A673 (cell line): ENCODE measurements at regions of chr18 and their contacts with region 1.

Region 1: DNA sequence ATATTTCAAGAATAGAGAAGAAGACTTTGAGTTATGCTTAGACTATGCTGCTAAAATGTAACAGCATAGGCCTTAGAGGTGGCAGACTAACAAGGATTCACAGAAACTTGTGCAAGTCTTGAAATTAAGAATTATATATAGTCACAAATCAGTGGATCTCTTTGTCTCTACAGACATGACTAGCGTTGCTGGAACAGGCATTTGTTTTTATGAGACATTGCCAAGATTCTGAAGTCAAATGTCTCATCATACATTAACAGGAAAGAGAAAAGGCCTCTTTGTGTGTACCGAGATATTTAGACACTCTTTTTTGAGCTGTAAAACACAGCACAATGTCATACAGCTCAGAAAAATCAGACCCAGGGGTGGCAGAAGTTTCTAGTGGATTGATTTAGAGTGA is 207.1 kb downstream of the TMX3 start:
- DNase-seq: no peak
- H3K4me3 ChIP-seq: no peak overlapping the region
- H3K27ac ChIP-seq: peak overlapping the region; percentile 96
- H3K4me1 ChIP-seq: peaks cover 33% of the 10 kb centered on the region
- H3K27me3 ChIP-seq: no peaks in the 10 kb centered on the region
- CTCF ChIP-seq: no peak

Region 2: DNA sequence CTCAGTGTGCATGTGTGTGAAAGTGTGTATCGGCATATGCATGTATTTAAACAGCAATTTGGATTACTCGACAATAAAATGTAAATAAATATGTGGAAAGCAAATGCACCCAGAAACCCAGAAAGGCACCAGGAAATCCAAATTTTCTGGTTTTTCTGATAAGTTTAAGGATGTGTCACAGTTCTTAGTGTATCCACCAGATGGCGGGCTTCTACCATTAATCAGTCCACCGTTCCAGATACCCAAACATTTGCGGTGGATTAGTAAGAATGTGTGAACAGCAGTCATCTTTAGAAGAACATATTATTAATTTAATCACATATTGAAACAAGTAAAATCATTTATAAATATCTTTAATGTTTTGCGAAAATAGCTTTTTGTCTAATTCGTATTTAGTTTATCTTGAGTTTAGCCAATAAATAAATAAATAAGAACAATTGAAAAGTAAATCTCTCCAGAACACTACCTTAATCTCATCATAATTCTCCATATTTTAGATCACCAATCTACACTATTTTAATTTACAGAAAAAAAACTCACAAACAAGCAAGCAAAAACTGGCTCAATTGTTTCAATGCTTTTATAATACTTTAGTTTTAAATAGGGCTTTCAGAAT is 1290.1 kb before region 1 on chr18:
- CTCF ChIA-PET with region 1: no interaction called
- POLR2A ChIA-PET with region 1: no interaction called
- intact Hi-C with region 1: loop called (anchors 2 kb)
- DNase-seq: peak; percentile 77
- H3K4me3 ChIP-seq: no peak overlapping the region
- H3K27ac ChIP-seq: no peak overlapping the region
- H3K4me1 ChIP-seq: peaks cover 16% of the 10 kb centered on the region
- H3K27me3 ChIP-seq: no peaks in the 10 kb centered on the region
- CTCF ChIP-seq: peak; percentile 73

Region 3: DNA sequence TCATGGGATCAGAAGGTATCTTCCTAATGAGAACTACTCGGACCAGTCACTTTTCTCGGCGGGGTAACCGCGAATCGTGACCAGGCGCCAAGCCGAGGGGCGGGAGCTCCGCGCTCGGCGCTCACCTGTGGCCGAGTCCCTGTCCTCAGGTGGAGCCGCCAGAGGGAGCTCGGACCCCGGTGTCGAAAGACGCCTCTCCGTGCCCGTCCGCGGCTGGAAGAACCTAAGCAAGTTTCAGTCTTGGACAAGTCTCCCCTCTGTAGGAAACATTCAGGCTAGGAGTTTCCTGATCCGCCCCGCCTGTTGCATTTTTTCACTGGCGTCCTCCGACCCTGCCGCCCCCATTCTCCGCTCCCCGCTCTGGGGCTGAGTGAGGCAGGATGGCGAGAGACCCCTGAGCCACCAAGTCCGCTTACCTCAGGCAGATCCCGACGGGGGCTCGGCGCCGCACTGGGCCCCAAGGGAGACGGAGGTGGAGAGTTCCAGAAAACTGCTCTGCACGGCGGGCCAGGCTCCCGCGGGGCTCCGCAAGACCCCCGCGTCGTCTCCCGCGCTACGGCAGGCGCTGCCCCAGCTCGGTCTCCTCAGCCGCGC is 991.7 kb before region 1 on chr18:
- CTCF ChIA-PET with region 1: interaction called, 4 read pairs
- POLR2A ChIA-PET with region 1: interaction called, 25 read pairs
- intact Hi-C with region 1: loop called (anchors 2 kb)
- DNase-seq: peak; percentile 88
- H3K4me3 ChIP-seq: peak overlapping the region; percentile 85
- H3K27ac ChIP-seq: peak overlapping the region; percentile 90
- H3K4me1 ChIP-seq: peaks cover 8% of the 10 kb centered on the region
- H3K27me3 ChIP-seq: no peaks in the 10 kb centered on the region
- CTCF ChIP-seq: peak; percentile 79

Region 4: DNA sequence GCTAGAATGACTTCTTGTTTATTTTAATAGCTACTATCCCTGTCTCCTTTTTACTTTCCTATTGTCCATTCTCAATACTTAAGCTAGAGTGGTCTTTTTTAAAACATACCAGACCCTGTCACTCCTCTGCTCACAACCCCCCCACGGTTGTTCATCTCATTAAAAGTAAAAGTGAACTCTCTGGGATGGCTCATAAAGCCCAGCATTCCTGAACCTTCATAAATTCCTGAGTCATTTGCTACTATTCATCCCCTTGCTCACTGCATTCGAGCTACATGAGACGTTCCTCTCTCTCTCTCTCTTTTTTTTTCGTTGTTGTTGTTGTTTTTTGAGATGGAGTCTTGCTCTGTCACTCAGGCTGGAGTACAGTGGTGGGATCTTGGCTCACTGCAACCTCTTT is 842.5 kb before region 1 on chr18:
- CTCF ChIA-PET with region 1: no interaction called
- POLR2A ChIA-PET with region 1: no interaction called
- intact Hi-C with region 1: loop called (anchors 1 kb)
- DNase-seq: no peak
- H3K4me3 ChIP-seq: no peak overlapping the region
- H3K27ac ChIP-seq: peak overlapping the region; percentile 69
- H3K4me1 ChIP-seq: peaks cover 24% of the 10 kb centered on the region
- H3K27me3 ChIP-seq: no peaks in the 10 kb centered on the region
- CTCF ChIP-seq: no peak

Region 5: DNA sequence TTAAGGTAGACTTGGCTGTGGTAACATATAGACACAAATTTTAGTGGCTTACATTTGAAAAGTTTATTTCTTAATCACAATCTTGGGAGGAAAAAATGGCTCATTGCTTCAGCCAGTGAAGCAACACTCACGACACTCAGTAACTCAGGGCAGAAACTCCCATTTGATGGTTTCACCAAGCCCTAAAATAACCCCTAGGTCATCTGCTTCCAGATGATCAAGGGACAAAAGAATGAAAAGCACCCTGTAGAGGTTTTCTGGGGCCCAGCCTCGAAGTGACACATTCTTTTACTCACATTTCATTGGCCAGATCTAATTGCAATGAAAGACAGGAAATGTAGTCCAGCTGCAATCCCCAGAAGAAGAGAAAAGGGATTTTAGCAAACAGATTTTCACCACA is 68.8 kb before region 1 on chr18:
- CTCF ChIA-PET with region 1: no interaction called
- POLR2A ChIA-PET with region 1: interaction called, 12 read pairs
- intact Hi-C with region 1: loop called (anchors 1 kb)
- DNase-seq: peak; percentile 92
- H3K4me3 ChIP-seq: no peak overlapping the region
- H3K27ac ChIP-seq: peak overlapping the region; percentile 88
- H3K4me1 ChIP-seq: peaks cover 44% of the 10 kb centered on the region
- H3K27me3 ChIP-seq: no peaks in the 10 kb centered on the region
- CTCF ChIP-seq: no peak

Region 6: DNA sequence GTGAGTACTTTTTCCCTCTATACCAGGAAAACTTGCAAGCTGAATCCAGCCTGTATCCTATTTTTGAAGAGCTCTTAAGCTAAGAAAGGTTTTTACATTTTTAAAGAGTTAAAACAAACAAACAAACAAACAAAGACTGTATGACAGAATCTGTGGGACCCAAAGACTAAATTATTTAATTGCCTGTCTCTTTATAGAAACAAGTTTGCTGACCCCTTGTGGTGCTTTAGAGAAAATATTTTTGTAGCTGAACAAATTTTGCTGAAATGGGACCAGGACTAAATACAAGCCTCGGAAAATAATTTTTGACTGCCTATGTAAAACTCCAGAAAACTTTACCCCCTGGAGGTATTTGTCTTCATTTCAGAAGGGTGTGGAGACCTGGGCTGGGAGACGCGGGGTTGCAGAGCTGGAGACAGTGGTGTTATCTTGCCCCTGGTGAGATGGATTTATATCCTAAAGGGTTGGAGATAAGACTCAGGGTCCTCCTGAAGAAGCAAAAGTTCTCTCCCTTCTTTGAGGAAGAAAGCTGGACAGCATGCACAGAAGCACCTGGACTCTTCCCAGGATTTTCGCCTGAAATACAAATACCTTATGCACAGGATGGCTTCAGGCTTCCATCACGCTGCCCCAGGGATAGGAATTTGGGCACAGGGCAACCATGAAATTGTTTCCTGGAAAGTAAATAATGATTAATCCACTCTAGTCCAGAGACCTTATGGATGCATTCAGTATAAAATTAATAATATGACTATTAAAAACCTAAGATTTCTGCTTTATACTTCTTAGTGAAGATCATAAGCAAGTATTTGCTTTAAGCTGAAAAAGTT is 152.8 kb after region 1 on chr18:
- CTCF ChIA-PET with region 1: interaction called, 8 read pairs
- POLR2A ChIA-PET with region 1: no interaction called
- intact Hi-C with region 1: loop called (anchors 2 kb)
- DNase-seq: peak; percentile 76
- H3K4me3 ChIP-seq: no peak overlapping the region
- H3K27ac ChIP-seq: no peak overlapping the region
- H3K4me1 ChIP-seq: peaks cover 18% of the 10 kb centered on the region
- H3K27me3 ChIP-seq: no peaks in the 10 kb centered on the region
- CTCF ChIP-seq: peak; percentile 72